Common myeloid progenitor, CD34-positive (primary cell): ENCODE measurements at regions of chr5 and their contacts with region 1.

Region 1: GRCh38 chr5:76292620-76293322 is 110.3 kb upstream of the IQGAP2 start:
- DNase-seq: peak; percentile 28 to 85 (median 77)
- H3K4me3 ChIP-seq: no peak overlapping the region
- H3K27ac ChIP-seq: no peak overlapping the region
- H3K4me1 ChIP-seq: peaks cover 21 to 77% (median 39%) of the 10 kb centered on the region in 4 experiments
- H3K27me3 ChIP-seq: no peaks in the 10 kb centered on the region

Region 2: DNA sequence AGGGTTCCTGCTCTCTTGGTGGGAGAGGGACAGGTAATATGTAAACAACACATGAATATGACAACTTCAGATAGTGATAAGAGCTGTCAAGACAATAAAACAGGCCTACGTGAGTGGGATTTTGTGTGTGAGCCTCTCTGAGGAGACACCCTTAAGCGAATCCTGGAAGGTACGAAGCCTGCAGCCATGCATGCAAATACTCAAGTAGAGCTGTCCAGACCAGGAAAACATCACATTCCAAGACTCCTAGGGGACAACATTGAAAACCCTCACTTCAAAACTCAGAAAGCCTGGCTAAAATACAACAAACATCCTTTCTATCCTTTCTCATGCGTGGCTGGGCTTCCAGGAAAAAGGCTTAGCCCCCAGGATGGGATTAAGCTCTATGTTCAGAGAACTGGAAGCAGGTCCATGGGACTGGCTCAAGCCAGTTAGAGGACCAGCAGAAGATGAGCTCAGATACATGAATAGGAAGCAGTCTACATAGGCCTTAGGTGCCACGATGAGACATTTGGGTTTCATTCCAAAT is 14.4 kb before region 1 on chr5:
- CTCF ChIA-PET with region 1: interaction called, 15 read pairs
- POLR2A ChIA-PET with region 1: no interaction called
- DNase-seq: no peak
- H3K4me3 ChIP-seq: no peak overlapping the region
- H3K27ac ChIP-seq: no peak overlapping the region
- H3K4me1 ChIP-seq: peaks cover 12 to 45% (median 25%) of the 10 kb centered on the region in 4 experiments
- H3K27me3 ChIP-seq: no peaks in the 10 kb centered on the region